ENCODE measurements at regions of chr3 and their contacts with region 1.

Region 1: GRCh38 chr3:185942907-185943759 is 5.3 kb upstream of the TRA2B start:
- DNase-seq: peak; percentile 59 to 93 (median 78)
- ATAC-seq: peak; percentile 96 to 100 (median 98)
- H3K4me3 ChIP-seq: peak overlapping the region in 1 of 2 donors; percentile 16
- H3K4me3 Mint-ChIP-seq: peak overlapping the region; percentile 27 to 45 (median 29)
- H3K27ac ChIP-seq: no peak overlapping the region
- H3K27ac Mint-ChIP-seq: peak overlapping the region in 1 of 2 donors; percentile 48
- H3K4me1 ChIP-seq: peaks cover 0 to 14% of the 10 kb centered on the region in 2 experiments
- H3K4me1 Mint-ChIP-seq: peaks cover 17 to 18% (median 17%) of the 10 kb centered on the region in 3 donors
- H3K27me3 ChIP-seq: peaks cover 0 to 4% of the 10 kb centered on the region in 2 experiments
- H3K27me3 Mint-ChIP-seq: peaks cover 0 to 4% of the 10 kb centered on the region in 2 donors

Region 2: DNA sequence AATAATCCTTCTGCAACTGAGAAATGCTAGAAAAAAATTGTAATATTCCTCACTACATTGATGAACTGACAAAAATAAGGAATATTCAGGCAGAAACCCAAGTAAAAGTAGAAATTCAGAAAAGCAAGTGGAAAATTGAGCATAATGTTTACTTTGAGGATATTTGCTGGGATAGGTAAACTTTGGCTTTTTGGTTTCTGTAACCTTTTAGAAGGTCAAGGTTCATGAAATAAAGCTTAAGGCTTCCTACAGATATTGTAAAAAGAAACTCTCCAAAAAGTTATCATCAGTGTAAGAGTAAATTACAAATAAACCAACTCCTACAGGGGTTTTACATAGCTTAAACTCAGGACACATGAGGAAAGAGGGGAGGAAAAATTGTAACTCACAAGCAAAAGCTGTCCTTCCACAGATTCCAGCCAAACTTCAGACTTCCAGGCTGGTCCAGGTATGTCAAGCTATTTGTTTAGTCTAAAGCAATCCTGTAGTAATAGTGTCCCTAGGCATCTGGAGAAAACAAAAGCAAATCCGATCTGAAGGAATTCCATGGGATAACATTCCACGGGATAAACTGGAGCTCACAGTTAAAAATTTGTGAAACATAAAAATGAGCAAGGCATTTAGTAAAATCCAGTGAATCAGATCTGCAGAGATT is 811.4 kb before region 1 on chr3:
- CTCF ChIA-PET with region 1: no interaction called
- POLR2A ChIA-PET with region 1: no interaction called
- DNase-seq: no peak
- ATAC-seq: no peak
- H3K4me3 ChIP-seq: no peak overlapping the region
- H3K4me3 Mint-ChIP-seq: no peak overlapping the region
- H3K27ac ChIP-seq: no peak overlapping the region
- H3K27ac Mint-ChIP-seq: no peak overlapping the region
- H3K4me1 ChIP-seq: no peaks in the 10 kb centered on the region
- H3K4me1 Mint-ChIP-seq: no peaks in the 10 kb centered on the region
- H3K27me3 ChIP-seq: no peaks in the 10 kb centered on the region
- H3K27me3 Mint-ChIP-seq: peaks cover 16 to 20% of the 10 kb centered on the region in 2 donors

Region 3: DNA sequence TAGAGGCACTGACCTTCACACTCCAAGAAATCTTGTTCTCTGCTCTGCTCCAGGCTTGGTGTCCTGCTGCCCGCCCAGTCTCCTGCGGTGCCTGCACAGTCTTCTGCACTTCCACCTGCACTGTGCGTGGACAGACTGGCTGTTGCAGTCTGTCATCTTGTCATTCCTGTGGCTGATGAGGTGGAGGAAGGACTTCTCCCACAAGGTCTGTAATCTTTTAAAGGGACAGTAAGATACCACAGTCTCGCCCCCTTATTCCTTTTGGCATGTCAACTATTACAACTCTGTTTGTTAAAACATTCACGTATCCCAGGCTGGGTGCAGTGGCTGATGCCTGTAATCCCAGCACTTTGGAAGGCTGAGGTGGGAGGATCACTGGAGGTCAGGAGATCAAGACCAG is 64.2 kb before region 1 on chr3:
- CTCF ChIA-PET with region 1: no interaction called
- POLR2A ChIA-PET with region 1: no interaction called
- DNase-seq: no peak
- ATAC-seq: no peak
- H3K4me3 ChIP-seq: no peak overlapping the region
- H3K4me3 Mint-ChIP-seq: no peak overlapping the region
- H3K27ac ChIP-seq: no peak overlapping the region
- H3K27ac Mint-ChIP-seq: no peak overlapping the region
- H3K4me1 ChIP-seq: no peaks in the 10 kb centered on the region
- H3K4me1 Mint-ChIP-seq: no peaks in the 10 kb centered on the region
- H3K27me3 ChIP-seq: peaks cover 0 to 22% of the 10 kb centered on the region in 2 experiments
- H3K27me3 Mint-ChIP-seq: peaks cover 9% of the 10 kb centered on the region in 2 donors

Region 4: GRCh38 chr3:185924375-185924774 is 18.8 kb before region 1 on chr3:
- CTCF ChIA-PET with region 1: interaction called, 25 to 35 read pairs
- POLR2A ChIA-PET with region 1: interaction called, 3 to 45 read pairs
- DNase-seq: no peak
- ATAC-seq: no peak
- H3K4me3 ChIP-seq: no peak overlapping the region
- H3K4me3 Mint-ChIP-seq: peak overlapping the region in 1 of 3 donors; percentile 98
- H3K27ac ChIP-seq: no peak overlapping the region
- H3K27ac Mint-ChIP-seq: no peak overlapping the region
- H3K4me1 ChIP-seq: peaks cover 15 to 32% of the 10 kb centered on the region in 2 experiments
- H3K4me1 Mint-ChIP-seq: peaks cover 63 to 71% (median 66%) of the 10 kb centered on the region in 3 donors
- H3K27me3 ChIP-seq: no peaks in the 10 kb centered on the region
- H3K27me3 Mint-ChIP-seq: no peaks in the 10 kb centered on the region

Region 5: GRCh38 chr3:185929192-185930151 is 13.7 kb before region 1 on chr3:
- CTCF ChIA-PET with region 1: interaction called, 25 to 35 read pairs
- POLR2A ChIA-PET with region 1: interaction called in 1 of 2 experiments, 45 read pairs
- DNase-seq: no peak
- ATAC-seq: no peak
- H3K4me3 ChIP-seq: peak overlapping the region; percentile 6 to 38
- H3K4me3 Mint-ChIP-seq: peak overlapping the region; percentile 98 to 100 (median 100)
- H3K27ac ChIP-seq: peak overlapping the region; percentile 16
- H3K27ac Mint-ChIP-seq: peak overlapping the region; percentile 55 to 68
- H3K4me1 ChIP-seq: peaks cover 22 to 80% of the 10 kb centered on the region in 2 experiments
- H3K4me1 Mint-ChIP-seq: peaks cover 96 to 100% (median 97%) of the 10 kb centered on the region in 3 donors
- H3K27me3 ChIP-seq: no peaks in the 10 kb centered on the region
- H3K27me3 Mint-ChIP-seq: no peaks in the 10 kb centered on the region

Region 6: GRCh38 chr3:185956244-185956643 is 13.1 kb after region 1 on chr3:
- CTCF ChIA-PET with region 1: interaction called, 7 to 26 read pairs
- POLR2A ChIA-PET with region 1: interaction called, 3 to 4 read pairs
- DNase-seq: no peak
- ATAC-seq: no peak
- H3K4me3 ChIP-seq: no peak overlapping the region
- H3K4me3 Mint-ChIP-seq: no peak overlapping the region
- H3K27ac ChIP-seq: no peak overlapping the region
- H3K27ac Mint-ChIP-seq: peak overlapping the region in 1 of 2 donors; percentile 20
- H3K4me1 ChIP-seq: peaks cover 6 to 8% of the 10 kb centered on the region in 2 experiments
- H3K4me1 Mint-ChIP-seq: peaks cover 0 to 4% (median 4%) of the 10 kb centered on the region in 3 donors
- H3K27me3 ChIP-seq: peaks cover 0 to 18% of the 10 kb centered on the region in 2 experiments
- H3K27me3 Mint-ChIP-seq: peaks cover 5 to 18% of the 10 kb centered on the region in 2 donors

Region 7: GRCh38 chr3:185983495-185984141 is 40.5 kb after region 1 on chr3:
- CTCF ChIA-PET with region 1: interaction called, 8 to 10 read pairs
- POLR2A ChIA-PET with region 1: no interaction called
- DNase-seq: peak in 31 of 35 experiments; percentile 3 to 79 (median 34)
- ATAC-seq: peak; percentile 53 to 74 (median 72)
- H3K4me3 ChIP-seq: no peak overlapping the region
- H3K4me3 Mint-ChIP-seq: no peak overlapping the region
- H3K27ac ChIP-seq: no peak overlapping the region
- H3K27ac Mint-ChIP-seq: no peak overlapping the region
- H3K4me1 ChIP-seq: peaks cover 0 to 8% of the 10 kb centered on the region in 2 experiments
- H3K4me1 Mint-ChIP-seq: peaks cover 4 to 6% (median 4%) of the 10 kb centered on the region in 3 donors
- H3K27me3 ChIP-seq: peaks cover 0 to 10% of the 10 kb centered on the region in 2 experiments
- H3K27me3 Mint-ChIP-seq: peaks cover 8 to 14% of the 10 kb centered on the region in 2 donors

Region 8: DNA sequence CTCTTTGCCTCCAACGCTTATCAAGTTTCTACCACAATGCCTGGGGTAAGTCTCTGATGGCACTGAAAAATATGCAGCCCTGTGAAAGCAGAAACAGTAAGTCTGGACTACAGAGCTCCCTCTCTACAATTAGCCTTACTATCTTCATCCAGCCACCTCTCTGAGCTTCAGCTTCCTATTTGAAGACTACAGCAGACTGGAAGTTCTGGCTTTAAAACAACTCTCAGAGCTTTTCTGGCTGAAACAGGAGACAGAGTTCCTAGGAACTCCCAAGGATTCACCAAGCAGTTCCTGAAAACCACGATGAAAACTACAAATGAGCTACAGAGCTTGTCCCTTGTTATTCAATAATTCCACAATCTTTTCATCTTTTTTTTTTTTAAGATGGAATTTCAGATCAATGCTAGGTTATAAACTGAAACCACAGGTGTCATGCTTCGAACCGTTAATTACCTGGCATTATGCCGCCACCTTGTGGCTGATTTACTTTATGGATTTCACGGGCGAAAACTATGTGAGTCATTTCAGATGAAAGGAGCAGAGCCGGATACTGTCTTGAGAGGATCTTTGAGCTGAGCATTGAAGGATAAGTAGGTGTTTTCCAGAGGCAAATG is 597.2 kb after region 1 on chr3:
- CTCF ChIA-PET with region 1: interaction called, 3 to 21 read pairs
- POLR2A ChIA-PET with region 1: interaction called in 1 of 2 experiments, 3 read pairs
- DNase-seq: peak; percentile 60 to 93 (median 79)
- ATAC-seq: peak; percentile 86 to 97 (median 95)
- H3K4me3 ChIP-seq: no peak overlapping the region
- H3K4me3 Mint-ChIP-seq: no peak overlapping the region
- H3K27ac ChIP-seq: no peak overlapping the region
- H3K27ac Mint-ChIP-seq: peak overlapping the region; percentile 4 to 68
- H3K4me1 ChIP-seq: peaks cover 3 to 6% of the 10 kb centered on the region in 2 experiments
- H3K4me1 Mint-ChIP-seq: peaks cover 9 to 15% (median 9%) of the 10 kb centered on the region in 3 donors
- H3K27me3 ChIP-seq: no peaks in the 10 kb centered on the region
- H3K27me3 Mint-ChIP-seq: no peaks in the 10 kb centered on the region

Region 9: GRCh38 chr3:186570096-186570940 is 627.2 kb after region 1 on chr3 and contains the start of gene DNAJB11:
- CTCF ChIA-PET with region 1: interaction called, 7 to 11 read pairs
- POLR2A ChIA-PET with region 1: interaction called, 4 to 12 read pairs
- DNase-seq: peak; percentile 87 to 100 (median 99)
- ATAC-seq: peak; percentile 85 to 87 (median 86)
- H3K4me3 ChIP-seq: peak within 1 kb of the TSS; percentile 77 to 88
- H3K4me3 Mint-ChIP-seq: peak within 1 kb of the TSS; percentile 88 to 92 (median 90)
- H3K27ac ChIP-seq: peak within 1 kb of the TSS; percentile 80
- H3K27ac Mint-ChIP-seq: peak within 1 kb of the TSS; percentile 96 to 98
- H3K4me1 ChIP-seq: peaks cover 25 to 36% of the 10 kb centered on the region in 2 experiments
- H3K4me1 Mint-ChIP-seq: peaks cover 63 to 68% (median 64%) of the 10 kb centered on the region in 3 donors
- H3K27me3 ChIP-seq: no peaks in the 10 kb centered on the region
- H3K27me3 Mint-ChIP-seq: no peaks in the 10 kb centered on the region
- total RNA-seq, gene DNAJB11: 28.7 to 65.4 (median 31.7) TPM